ENCODE measurements at regions of chr3 and their contacts with region 1.

Region 1: GRCh38 chr3:196096382-196096953 is 14.6 kb upstream of the TFRC start:
- DNase-seq: peak; percentile 87
- ATAC-seq: peak; percentile 95
- H3K4me3 ChIP-seq: peak overlapping the region; percentile 19; the same call in 1 of the 2 replicates
- H3K27ac ChIP-seq: peak overlapping the region; percentile 90
- H3K4me1 ChIP-seq: peaks cover 29% of the 10 kb centered on the region
- H3K27me3 ChIP-seq: no peaks in the 10 kb centered on the region
- CTCF ChIP-seq: no peak
- EP300 ChIP-seq: peak in 1 of 2 experiments; percentile 15; a peak in 1 of 4 replicates
- POLR2A ChIP-seq: no peak
- RAD21 ChIP-seq: no peak

Region 2: GRCh38 chr3:196108083-196108743 is 11.7 kb after region 1 on chr3:
- CTCF ChIA-PET with region 1: interaction called, 35 read pairs
- POLR2A ChIA-PET with region 1: interaction called, 61 read pairs
- RAD21 ChIA-PET with region 1: interaction called, 77 read pairs
- SMC1A ChIA-PET with region 1: interaction called, 99 read pairs
- in situ Hi-C with region 1: no loop called
- intact Hi-C with region 1: no loop called
- DNase-seq: no peak
- ATAC-seq: no peak
- H3K4me3 ChIP-seq: no peak overlapping the region
- H3K27ac ChIP-seq: no peak overlapping the region
- H3K4me1 ChIP-seq: peaks cover 17% of the 10 kb centered on the region
- H3K27me3 ChIP-seq: no peaks in the 10 kb centered on the region
- CTCF ChIP-seq: no peak
- EP300 ChIP-seq: no peak
- POLR2A ChIP-seq: no peak
- RAD21 ChIP-seq: no peak

Region 3: DNA sequence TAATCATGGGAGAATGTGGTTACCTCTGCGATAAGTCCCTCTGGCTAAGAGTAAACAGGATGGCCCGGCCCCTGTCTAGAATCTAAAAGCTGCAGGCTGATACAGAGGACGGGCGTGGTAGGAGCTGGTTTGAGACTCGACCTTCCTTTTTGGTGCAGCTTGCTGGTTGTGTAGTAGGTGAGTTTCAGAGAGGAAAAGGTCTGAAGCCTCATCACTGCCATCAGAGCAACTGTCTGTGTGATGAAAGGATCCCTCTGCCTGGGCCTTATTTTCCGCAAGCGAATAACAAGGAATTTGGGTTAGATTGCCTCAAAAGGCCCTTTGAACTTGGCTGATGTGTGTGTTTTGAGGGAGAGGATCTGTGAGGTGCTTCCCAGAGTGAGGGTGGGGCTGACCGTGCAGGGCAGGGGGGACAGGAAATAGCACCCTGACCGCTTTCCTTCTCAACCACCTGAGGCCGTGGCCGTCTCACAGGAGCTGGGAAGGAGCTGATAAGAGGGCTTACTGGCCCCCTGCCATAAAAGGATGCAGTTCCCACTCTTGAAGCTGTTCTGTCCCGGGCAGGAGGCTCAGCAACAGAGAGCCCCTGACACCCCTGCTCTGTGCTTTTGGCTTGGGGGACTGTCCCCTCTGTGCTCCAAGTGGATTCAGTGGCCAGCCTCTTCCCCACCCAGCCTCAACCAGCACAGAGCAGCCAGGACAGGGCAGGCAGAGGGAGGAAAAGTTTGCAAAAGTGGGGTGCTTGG is 31.0 kb after region 1 on chr3:
- CTCF ChIA-PET with region 1: interaction called, 4 read pairs
- POLR2A ChIA-PET with region 1: interaction called, 3 read pairs
- RAD21 ChIA-PET with region 1: interaction called, 14 read pairs
- SMC1A ChIA-PET with region 1: interaction called, 9 read pairs
- in situ Hi-C with region 1: no loop called
- intact Hi-C with region 1: no loop called
- DNase-seq: no peak
- ATAC-seq: peak; percentile 80
- H3K4me3 ChIP-seq: no peak overlapping the region
- H3K27ac ChIP-seq: peak overlapping the region; percentile 27
- H3K4me1 ChIP-seq: peaks cover 25% of the 10 kb centered on the region
- H3K27me3 ChIP-seq: no peaks in the 10 kb centered on the region
- CTCF ChIP-seq: no peak
- EP300 ChIP-seq: no peak
- POLR2A ChIP-seq: no peak
- RAD21 ChIP-seq: no peak

Region 4: GRCh38 chr3:196179380-196180308 is 83.2 kb after region 1 on chr3:
- CTCF ChIA-PET with region 1: interaction called, 27 read pairs
- POLR2A ChIA-PET with region 1: interaction called, 51 read pairs
- RAD21 ChIA-PET with region 1: interaction called, 42 read pairs
- SMC1A ChIA-PET with region 1: interaction called, 81 read pairs
- in situ Hi-C with region 1: no loop called
- intact Hi-C with region 1: no loop called
- DNase-seq: peak; percentile 98
- ATAC-seq: peak; percentile 81
- H3K4me3 ChIP-seq: peak overlapping the region; percentile 50; the same call in 1 of the 2 replicates
- H3K27ac ChIP-seq: peak overlapping the region; percentile 93
- H3K4me1 ChIP-seq: peaks cover 55% of the 10 kb centered on the region
- H3K27me3 ChIP-seq: no peaks in the 10 kb centered on the region
- CTCF ChIP-seq: peak; percentile 45 to 66 (median 48)
- EP300 ChIP-seq: peak; percentile 71 to 88
- POLR2A ChIP-seq: peak; percentile 75
- RAD21 ChIP-seq: peak; percentile 70

Region 5: GRCh38 chr3:196192036-196192523 is 95.6 kb after region 1 on chr3:
- CTCF ChIA-PET with region 1: interaction called, 8 read pairs
- POLR2A ChIA-PET with region 1: interaction called, 20 read pairs
- RAD21 ChIA-PET with region 1: interaction called, 27 read pairs
- SMC1A ChIA-PET with region 1: interaction called, 35 read pairs
- in situ Hi-C with region 1: no loop called
- intact Hi-C with region 1: no loop called
- DNase-seq: peak; percentile 74
- ATAC-seq: peak; percentile 77
- H3K4me3 ChIP-seq: peak overlapping the region; percentile 53; the same call in 1 of the 2 replicates
- H3K27ac ChIP-seq: peak overlapping the region; percentile 83
- H3K4me1 ChIP-seq: peaks cover 55% of the 10 kb centered on the region
- H3K27me3 ChIP-seq: no peaks in the 10 kb centered on the region
- CTCF ChIP-seq: peak in 1 of 3 experiments; percentile 5; a peak in 1 of 6 replicates
- EP300 ChIP-seq: peak; percentile 34 to 53; a peak in 3 of 4 replicates
- POLR2A ChIP-seq: peak; percentile 62
- RAD21 ChIP-seq: peak; percentile 42; the same call in 1 of the 2 replicates

Region 6: DNA sequence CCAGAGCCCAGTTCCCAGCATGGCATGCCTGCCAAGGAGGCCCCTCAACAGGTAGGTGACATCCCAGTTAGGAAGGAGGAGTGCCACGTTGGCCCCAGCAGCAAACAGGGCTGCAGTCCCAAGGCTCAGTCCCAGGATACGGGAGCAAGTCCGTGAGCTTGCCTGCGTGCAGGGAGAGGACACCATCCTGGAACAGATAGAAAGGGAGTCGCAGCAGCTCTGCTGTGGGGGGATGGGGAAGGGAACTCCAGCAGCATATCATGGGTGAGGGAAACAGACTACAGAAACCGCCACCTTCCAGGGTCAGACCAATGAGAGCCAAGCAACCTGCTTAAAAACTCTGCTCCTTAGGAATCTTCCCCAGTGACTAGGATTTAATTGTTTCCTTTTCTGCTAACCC is 230.9 kb after region 1 on chr3:
- CTCF ChIA-PET with region 1: no interaction called
- POLR2A ChIA-PET with region 1: no interaction called
- RAD21 ChIA-PET with region 1: no interaction called
- SMC1A ChIA-PET with region 1: no interaction called
- in situ Hi-C with region 1: no loop called
- intact Hi-C with region 1: no loop called
- DNase-seq: no peak
- ATAC-seq: no peak
- H3K4me3 ChIP-seq: no peak overlapping the region
- H3K27ac ChIP-seq: no peak overlapping the region
- H3K4me1 ChIP-seq: no peaks in the 10 kb centered on the region
- H3K27me3 ChIP-seq: no peaks in the 10 kb centered on the region
- CTCF ChIP-seq: no peak
- EP300 ChIP-seq: no peak
- POLR2A ChIP-seq: no peak
- RAD21 ChIP-seq: no peak

Region 7: DNA sequence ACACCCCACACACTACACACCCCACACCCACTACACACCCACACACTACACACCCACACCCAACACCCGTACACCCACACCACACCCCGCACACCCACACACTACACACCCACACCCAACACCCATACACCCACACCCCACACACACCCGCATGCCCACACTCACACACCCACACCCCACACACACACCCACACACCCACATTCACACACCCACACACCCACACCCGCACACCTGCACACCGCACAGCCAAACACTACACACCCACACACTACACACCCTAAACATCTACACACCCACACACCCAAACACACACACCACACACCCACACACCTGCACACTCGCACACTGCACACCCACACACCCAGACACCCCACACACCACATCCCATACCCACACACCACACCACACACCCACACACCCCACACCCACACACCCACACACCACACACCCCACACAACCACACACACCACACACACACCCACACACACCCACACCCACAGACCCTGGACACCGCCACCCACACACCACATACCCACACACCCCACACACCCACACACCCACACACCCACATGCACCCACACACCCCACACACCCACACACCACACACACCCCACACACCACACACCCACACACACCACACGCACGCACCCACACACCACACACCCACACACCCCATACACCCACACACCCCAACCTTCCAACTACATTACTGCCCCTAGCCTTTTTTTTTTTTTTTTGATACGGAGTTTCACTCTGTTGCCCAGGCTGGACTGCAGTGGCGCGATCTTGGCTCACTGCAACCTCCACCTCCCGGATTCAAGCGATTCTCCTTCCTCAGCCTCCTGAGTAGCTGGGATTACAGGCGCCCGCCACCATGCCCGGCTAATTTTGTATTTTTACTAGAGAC is 598.7 kb after region 1 on chr3:
- CTCF ChIA-PET with region 1: no interaction called
- POLR2A ChIA-PET with region 1: no interaction called
- RAD21 ChIA-PET with region 1: no interaction called
- SMC1A ChIA-PET with region 1: no interaction called
- in situ Hi-C with region 1: no loop called
- intact Hi-C with region 1: no loop called
- DNase-seq: no peak
- ATAC-seq: no peak
- H3K4me3 ChIP-seq: no peak overlapping the region
- H3K27ac ChIP-seq: no peak overlapping the region
- H3K4me1 ChIP-seq: no peaks in the 10 kb centered on the region
- H3K27me3 ChIP-seq: no peaks in the 10 kb centered on the region
- CTCF ChIP-seq: no peak
- EP300 ChIP-seq: no peak
- POLR2A ChIP-seq: no peak
- RAD21 ChIP-seq: no peak

Measured in GM12878 (cell line).